HEK293 (cell line): ENCODE measurements at regions of chr2 and their contacts with region 1.

Region 1: GRCh38 chr2:64488050-64488974 is 34.4 kb downstream of the LGALSL start:
- H3K4me3 ChIP-seq: no peak overlapping the region
- H3K27ac ChIP-seq: no peak overlapping the region
- H3K4me1 ChIP-seq: no peaks in the 10 kb centered on the region
- CTCF ChIP-seq: peak; percentile 47

Region 2: GRCh38 chr2:64243081-64244036 is 245.0 kb before region 1 on chr2:
- CTCF ChIA-PET with region 1: no interaction called
- POLR2A ChIA-PET with region 1: no interaction called
- H3K4me3 ChIP-seq: no peak overlapping the region
- H3K27ac ChIP-seq: no peak overlapping the region
- H3K4me1 ChIP-seq: no peaks in the 10 kb centered on the region
- CTCF ChIP-seq: no peak

Region 3: GRCh38 chr2:64426183-64426952 is 61.9 kb before region 1 on chr2:
- CTCF ChIA-PET with region 1: no interaction called
- POLR2A ChIA-PET with region 1: no interaction called
- H3K4me3 ChIP-seq: no peak overlapping the region
- H3K27ac ChIP-seq: no peak overlapping the region
- H3K4me1 ChIP-seq: peaks cover 7% of the 10 kb centered on the region; the same call in 1 of the 2 replicates
- CTCF ChIP-seq: no peak

Region 4: GRCh38 chr2:64447317-64448040 is 40.8 kb before region 1 on chr2:
- CTCF ChIA-PET with region 1: interaction called, 10 read pairs
- POLR2A ChIA-PET with region 1: no interaction called
- H3K4me3 ChIP-seq: no peak overlapping the region
- H3K27ac ChIP-seq: no peak overlapping the region
- H3K4me1 ChIP-seq: peaks cover 3% of the 10 kb centered on the region; the same call in 1 of the 2 replicates
- CTCF ChIP-seq: no peak

Region 5: DNA sequence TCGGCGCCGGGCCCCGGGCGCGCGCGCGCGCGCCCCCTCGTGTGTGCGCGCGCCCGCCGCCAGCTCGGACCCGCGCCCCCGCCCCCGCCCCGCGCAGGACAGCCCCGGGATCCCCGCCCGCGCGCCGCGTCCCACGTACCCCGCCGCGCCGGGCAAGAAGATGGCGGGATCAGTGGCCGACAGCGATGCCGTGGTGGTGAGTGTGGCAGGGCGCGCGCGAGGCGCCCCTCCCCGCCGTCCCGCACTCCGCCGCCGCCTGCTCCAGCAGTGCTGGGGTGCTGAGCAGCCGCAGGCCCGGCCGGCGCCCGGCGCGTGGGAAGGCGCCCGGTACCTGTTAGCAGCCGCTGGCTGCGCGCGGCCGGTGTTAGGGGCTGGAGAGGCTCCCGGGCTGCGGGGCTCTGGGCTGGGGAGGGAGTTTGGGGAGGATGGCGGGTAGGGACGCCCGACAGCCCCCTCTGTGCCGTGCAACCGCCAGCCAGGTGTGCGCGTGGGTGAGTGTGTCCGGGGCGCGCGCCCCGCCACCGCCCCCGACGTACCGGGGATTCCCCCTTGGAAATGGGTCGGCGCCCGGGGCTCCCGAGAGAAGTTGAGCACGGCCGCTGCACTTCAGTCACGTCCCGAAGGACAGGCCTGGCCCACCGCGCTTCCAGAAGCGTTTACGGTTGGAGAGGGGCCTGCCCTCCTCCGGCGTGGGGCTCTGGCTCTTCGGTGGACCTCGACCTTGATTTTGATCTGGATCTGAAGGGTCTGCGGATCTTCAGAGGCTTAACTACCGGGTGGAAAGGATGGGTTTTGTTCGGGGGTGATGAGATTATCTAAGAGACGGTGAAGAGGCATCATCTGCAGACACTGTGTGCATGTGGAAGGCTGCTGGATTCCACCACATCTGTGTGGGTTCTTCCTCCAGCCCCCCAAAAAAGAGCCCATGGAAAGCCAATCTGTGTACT is 33.7 kb before region 1 on chr2:
- CTCF ChIA-PET with region 1: interaction called, 16 read pairs
- POLR2A ChIA-PET with region 1: no interaction called
- H3K4me3 ChIP-seq: peak overlapping the region; percentile 77
- H3K27ac ChIP-seq: peak overlapping the region; percentile 84; the same call in 1 of the 2 replicates
- H3K4me1 ChIP-seq: peaks cover 10% of the 10 kb centered on the region; the same call in 1 of the 2 replicates
- CTCF ChIP-seq: no peak

Region 6: DNA sequence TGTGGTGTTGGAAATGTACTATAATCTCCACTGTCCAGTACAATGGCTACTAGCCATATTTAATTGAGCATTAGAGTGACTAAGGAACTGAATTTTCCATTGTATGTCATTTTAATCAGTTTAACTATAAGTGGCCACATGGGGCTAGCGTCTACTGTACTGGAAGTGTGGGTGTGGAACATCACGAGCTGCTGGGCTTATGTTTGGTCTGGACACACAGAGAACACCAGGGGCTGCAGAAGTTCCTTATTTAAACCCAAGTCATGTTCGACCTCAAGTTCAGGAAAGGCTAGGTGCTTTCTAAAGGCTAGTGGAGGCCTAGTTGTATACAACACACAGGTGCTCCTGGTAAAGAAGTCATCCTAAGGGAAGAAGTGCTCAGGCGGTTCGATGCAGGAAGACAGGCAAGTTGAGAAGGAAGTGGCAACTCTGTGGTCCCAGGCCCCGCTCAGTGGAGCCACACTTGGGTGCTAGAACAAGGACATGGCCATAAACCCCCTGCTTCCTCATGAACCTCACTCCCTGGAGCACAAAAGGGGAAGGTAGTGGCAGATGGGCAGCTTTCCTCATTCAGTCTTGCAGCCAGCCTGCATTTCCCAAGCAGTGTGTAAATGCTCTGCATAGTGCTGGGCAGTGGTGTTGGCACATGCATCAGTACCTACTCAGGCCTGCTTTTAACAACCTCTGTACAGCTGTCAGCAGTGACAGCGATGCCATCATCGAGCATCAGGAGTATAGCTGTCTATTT is 21.0 kb before region 1 on chr2:
- CTCF ChIA-PET with region 1: interaction called, 16 read pairs
- POLR2A ChIA-PET with region 1: no interaction called
- H3K4me3 ChIP-seq: no peak overlapping the region
- H3K27ac ChIP-seq: no peak overlapping the region
- H3K4me1 ChIP-seq: no peaks in the 10 kb centered on the region
- CTCF ChIP-seq: no peak

Region 7: DNA sequence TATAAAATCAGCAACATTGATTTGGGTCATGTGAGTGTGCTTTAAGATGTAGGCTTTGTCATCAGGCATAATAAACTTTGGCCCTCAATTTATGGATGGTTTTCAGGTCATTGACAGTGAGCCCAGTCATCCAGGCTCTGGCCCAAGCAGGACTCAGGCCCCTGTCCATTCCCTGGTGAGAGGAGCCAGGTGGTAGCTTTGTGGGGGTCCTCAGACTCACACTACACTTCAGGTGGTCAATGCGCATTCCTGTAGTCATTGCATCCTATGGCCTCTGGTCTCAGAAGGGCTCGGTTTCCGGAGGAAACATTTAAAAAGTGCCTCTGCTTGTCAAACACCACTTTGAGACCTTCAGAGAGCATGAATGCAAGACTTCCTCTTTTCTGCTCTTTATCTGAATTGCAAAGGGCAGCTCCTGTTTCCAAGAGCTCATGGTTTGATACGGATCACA is 14.2 kb before region 1 on chr2:
- CTCF ChIA-PET with region 1: interaction called, 11 read pairs
- POLR2A ChIA-PET with region 1: no interaction called
- H3K4me3 ChIP-seq: no peak overlapping the region
- H3K27ac ChIP-seq: no peak overlapping the region
- H3K4me1 ChIP-seq: no peaks in the 10 kb centered on the region
- CTCF ChIP-seq: no peak

Region 8: GRCh38 chr2:64504774-64505720 is 16.7 kb after region 1 on chr2:
- CTCF ChIA-PET with region 1: interaction called, 39 read pairs
- POLR2A ChIA-PET with region 1: interaction called, 3 read pairs
- H3K4me3 ChIP-seq: no peak overlapping the region
- H3K27ac ChIP-seq: no peak overlapping the region
- H3K4me1 ChIP-seq: no peaks in the 10 kb centered on the region
- CTCF ChIP-seq: no peak

Region 9: GRCh38 chr2:64562148-64562784 is 74.0 kb after region 1 on chr2:
- CTCF ChIA-PET with region 1: interaction called, 17 read pairs
- POLR2A ChIA-PET with region 1: no interaction called
- H3K4me3 ChIP-seq: no peak overlapping the region
- H3K27ac ChIP-seq: no peak overlapping the region
- H3K4me1 ChIP-seq: peaks cover 21% of the 10 kb centered on the region
- CTCF ChIP-seq: no peak